Colonic mucosa (tissue), 4 donors: ENCODE measurements at regions of chr6 and their contacts with region 1.

Region 1: GRCh38 chr6:73732845-73733675 is 37.1 kb downstream of the CD109 start:
- DNase-seq: peak; percentile 64
- H3K4me3 ChIP-seq: no peak overlapping the region
- H3K27ac ChIP-seq: no peak overlapping the region
- H3K4me1 ChIP-seq: no peaks in the 10 kb centered on the region
- H3K27me3 ChIP-seq: no peaks in the 10 kb centered on the region
- CTCF ChIP-seq: peak; percentile 89

Region 2: GRCh38 chr6:72984981-72985665 is 747.9 kb before region 1 on chr6:
- intact Hi-C with region 1: no loop called
- DNase-seq: no peak
- H3K4me3 ChIP-seq: no peak overlapping the region
- H3K27ac ChIP-seq: no peak overlapping the region
- H3K4me1 ChIP-seq: no peaks in the 10 kb centered on the region
- H3K27me3 ChIP-seq: no peaks in the 10 kb centered on the region
- CTCF ChIP-seq: no peak

Region 3: DNA sequence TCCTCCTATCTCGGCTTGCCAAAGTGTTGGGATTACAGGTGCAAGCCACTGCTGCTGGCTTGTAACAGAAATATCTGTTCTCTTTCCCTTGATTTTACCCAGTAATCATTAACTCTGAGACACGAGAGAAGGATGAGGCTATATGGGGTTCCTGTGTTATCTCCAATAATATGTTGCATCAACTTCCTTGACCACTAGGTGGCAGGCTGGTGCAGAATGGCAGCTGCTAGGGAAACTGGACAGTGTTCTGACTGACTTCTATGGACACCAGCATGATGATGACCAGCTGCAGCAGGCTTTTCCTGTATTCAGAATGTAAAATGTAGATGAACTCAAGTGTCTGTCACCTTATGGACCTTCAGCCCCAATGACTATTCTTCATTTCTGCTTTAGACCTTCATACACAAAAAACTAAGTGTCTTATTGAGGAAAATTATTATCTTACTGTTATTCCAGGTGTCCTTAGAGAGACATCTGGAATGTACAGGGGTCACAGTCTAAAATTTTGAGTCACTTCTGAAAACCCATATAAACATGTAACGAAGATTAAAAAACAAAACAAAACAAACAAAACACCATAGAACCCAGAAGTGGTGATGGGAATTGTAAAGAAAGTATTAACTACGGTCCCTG is 57.5 kb before region 1 on chr6:
- intact Hi-C with region 1: loop called (anchors 2 kb)
- DNase-seq: peak; percentile 88
- H3K4me3 ChIP-seq: no peak overlapping the region
- H3K27ac ChIP-seq: no peak overlapping the region
- H3K4me1 ChIP-seq: no peaks in the 10 kb centered on the region
- H3K27me3 ChIP-seq: no peaks in the 10 kb centered on the region
- CTCF ChIP-seq: peak; percentile 91

Region 4: DNA sequence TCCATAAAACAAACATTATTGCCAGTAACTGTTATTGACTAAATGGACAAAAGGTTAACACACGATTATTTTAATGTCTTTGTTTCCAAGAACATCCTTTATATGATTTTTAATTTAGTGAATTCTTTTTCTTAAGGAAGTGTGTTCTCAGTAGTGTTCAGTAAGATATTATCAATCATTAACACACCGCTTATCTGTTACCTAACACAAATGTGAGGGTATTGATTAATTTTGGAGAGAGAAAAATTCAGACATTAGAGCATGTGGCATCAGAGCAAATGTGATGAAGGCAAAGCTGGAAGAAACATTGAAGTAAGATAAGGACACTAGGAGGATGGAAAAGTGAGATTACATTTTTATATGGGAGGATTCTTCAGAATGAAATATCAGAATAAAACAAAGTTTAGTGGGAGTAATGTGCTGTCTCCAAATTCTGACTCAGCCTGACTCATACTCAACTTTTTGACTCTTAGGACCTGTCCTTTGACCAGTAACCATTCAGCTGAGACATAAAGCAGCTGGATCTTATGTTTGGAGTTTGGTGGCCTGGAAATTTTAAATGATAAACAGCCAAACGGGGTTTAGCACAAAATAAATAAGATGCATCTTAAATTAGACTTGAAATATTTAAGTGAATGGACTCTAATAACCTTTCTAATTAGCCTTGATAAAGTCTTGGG is 311.5 kb after region 1 on chr6:
- intact Hi-C with region 1: no loop called
- DNase-seq: no peak
- H3K4me3 ChIP-seq: no peak overlapping the region
- H3K27ac ChIP-seq: no peak overlapping the region
- H3K4me1 ChIP-seq: no peaks in the 10 kb centered on the region
- H3K27me3 ChIP-seq: no peaks in the 10 kb centered on the region
- CTCF ChIP-seq: no peak